HCT116 (cell line): ENCODE measurements at regions of chr22 and their contacts with region 1.

Region 1: GRCh38 chr22:37676736-37677492 is 1.5 kb downstream of the LGALS1 start:
- DNase-seq: peak; percentile 69
- ATAC-seq: peak; percentile 49
- H3K4me3 ChIP-seq: peak overlapping the region; percentile 71 to 86
- H3K27ac ChIP-seq: peak overlapping the region; percentile 97
- H3K4me1 ChIP-seq: peaks cover 40 to 75% of the 10 kb centered on the region in 2 experiments
- H3K27me3 ChIP-seq: no peaks in the 10 kb centered on the region
- CTCF ChIP-seq: no peak
- POLR2A ChIP-seq: no peak
- RAD21 ChIP-seq: no peak

Region 2: DNA sequence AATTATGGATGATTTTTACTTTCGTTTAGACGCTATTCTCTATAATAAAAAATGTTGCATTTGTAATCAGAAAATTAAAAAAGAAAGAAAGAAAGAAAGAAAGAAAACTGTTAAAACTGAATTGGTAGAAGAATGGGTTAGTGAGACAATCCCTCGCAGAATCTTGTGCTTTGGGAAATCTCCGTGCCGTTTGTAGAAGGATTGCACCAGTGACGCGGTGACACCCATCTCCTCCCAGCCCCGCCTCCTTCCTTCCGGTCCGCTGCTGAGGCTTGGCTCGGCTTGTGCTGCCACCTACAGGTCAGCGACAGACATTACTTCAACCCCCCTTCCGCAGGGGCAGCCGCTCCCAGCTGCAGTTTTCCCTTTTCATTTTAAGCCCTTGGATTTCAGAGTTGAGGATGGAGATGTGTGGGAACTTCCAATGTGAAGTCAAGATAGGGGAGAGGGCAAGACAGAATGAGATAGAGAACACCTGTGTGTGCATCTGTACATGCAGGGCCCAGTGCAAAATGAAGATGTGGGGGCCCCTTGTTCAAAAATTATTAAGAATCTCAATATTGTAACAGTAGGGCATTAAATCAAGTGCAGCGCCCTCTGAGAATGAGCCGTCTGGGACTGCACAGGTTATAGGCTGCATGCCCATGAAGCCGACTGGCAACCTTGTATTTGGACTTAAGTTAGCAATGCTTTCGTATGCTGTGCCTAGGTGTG is 698.8 kb before region 1 on chr22:
- CTCF ChIA-PET with region 1: no interaction called
- POLR2A ChIA-PET with region 1: no interaction called
- RAD21 ChIA-PET with region 1: no interaction called
- intact Hi-C with region 1: no loop called
- DNase-seq: peak; percentile 70
- ATAC-seq: peak; percentile 88
- H3K4me3 ChIP-seq: peak overlapping the region; percentile 35 to 48
- H3K27ac ChIP-seq: no peak overlapping the region
- H3K4me1 ChIP-seq: peaks cover 5 to 12% of the 10 kb centered on the region in 2 experiments
- H3K27me3 ChIP-seq: no peaks in the 10 kb centered on the region
- CTCF ChIP-seq: peak; percentile 80 to 97 (median 92)
- POLR2A ChIP-seq: peak; percentile 41
- RAD21 ChIP-seq: peak; percentile 96

Region 3: DNA sequence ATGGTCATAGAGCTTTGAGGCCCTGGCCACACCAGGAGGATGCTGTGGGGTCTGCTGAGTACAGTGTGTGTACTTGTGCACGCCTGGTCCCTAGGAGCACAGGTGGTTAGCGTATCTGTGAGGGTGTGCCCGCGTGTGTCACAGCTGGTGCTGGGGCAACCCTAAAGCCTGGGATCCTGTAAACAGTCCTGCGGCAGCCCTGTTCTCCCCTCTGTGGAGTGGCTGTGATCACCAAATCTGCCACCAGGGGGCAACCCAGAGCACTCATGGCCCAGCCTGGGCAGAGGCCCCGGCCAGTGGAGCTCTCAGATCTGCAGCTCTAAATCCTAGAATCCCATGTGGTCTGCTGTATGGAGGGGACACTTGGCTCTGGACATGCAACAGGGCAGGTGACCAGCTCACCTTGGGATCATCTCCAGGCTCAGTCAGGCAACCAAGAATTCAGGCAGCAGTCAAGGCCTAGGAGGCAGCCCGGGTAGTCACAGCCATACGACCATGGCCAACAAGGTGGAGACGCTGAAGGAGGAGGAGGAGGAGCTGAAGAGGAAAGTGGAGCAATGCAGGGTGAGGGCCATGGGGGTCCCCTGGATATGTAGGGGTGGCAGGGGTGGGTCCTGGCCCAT is 33.6 kb before region 1 on chr22:
- CTCF ChIA-PET with region 1: interaction called, 28 read pairs
- POLR2A ChIA-PET with region 1: interaction called, 21 read pairs
- RAD21 ChIA-PET with region 1: interaction called, 13 to 15 read pairs
- intact Hi-C with region 1: loop called (anchors 2 kb)
- DNase-seq: no peak
- ATAC-seq: peak; percentile 73
- H3K4me3 ChIP-seq: no peak overlapping the region
- H3K27ac ChIP-seq: no peak overlapping the region
- H3K4me1 ChIP-seq: peaks cover 34 to 60% of the 10 kb centered on the region in 2 experiments
- H3K27me3 ChIP-seq: no peaks in the 10 kb centered on the region
- CTCF ChIP-seq: peak; percentile 85 to 94 (median 93)
- POLR2A ChIP-seq: no peak
- RAD21 ChIP-seq: peak; percentile 81

Region 4: GRCh38 chr22:37658133-37659065 is 18.5 kb before region 1 on chr22 and contains the start of gene PDXP:
- CTCF ChIA-PET with region 1: interaction called, 12 read pairs
- POLR2A ChIA-PET with region 1: interaction called, 71 read pairs
- RAD21 ChIA-PET with region 1: interaction called in 1 of 2 experiments, 5 read pairs
- intact Hi-C with region 1: no loop called
- DNase-seq: peak; percentile 100
- ATAC-seq: peak; percentile 96
- H3K4me3 ChIP-seq: peak within 1 kb of the TSS; percentile 86 to 93
- H3K27ac ChIP-seq: peak within 1 kb of the TSS; percentile 86
- H3K4me1 ChIP-seq: peaks cover 11 to 30% of the 10 kb centered on the region in 2 experiments; a peak in 3 of 4 replicates
- H3K27me3 ChIP-seq: no peaks in the 10 kb centered on the region
- CTCF ChIP-seq: no peak
- POLR2A ChIP-seq: peak; percentile 77
- RAD21 ChIP-seq: no peak
- total RNA-seq, gene PDXP: 42.7 TPM

Region 5: GRCh38 chr22:37752466-37753087 is 75.7 kb after region 1 on chr22:
- CTCF ChIA-PET with region 1: interaction called, 3 read pairs
- POLR2A ChIA-PET with region 1: interaction called, 10 read pairs
- RAD21 ChIA-PET with region 1: no interaction called
- intact Hi-C with region 1: no loop called
- DNase-seq: peak; percentile 92
- ATAC-seq: peak; percentile 67
- H3K4me3 ChIP-seq: peak overlapping the region; percentile 94 to 98
- H3K27ac ChIP-seq: peak overlapping the region; percentile 98
- H3K4me1 ChIP-seq: peaks cover 65 to 79% of the 10 kb centered on the region in 2 experiments
- H3K27me3 ChIP-seq: no peaks in the 10 kb centered on the region
- CTCF ChIP-seq: 0 out of 6 replicates have a peak, but pooled peaks of 1 of the 3 experiments have one; percentile 25
- POLR2A ChIP-seq: no peak
- RAD21 ChIP-seq: no peak